ENCODE measurements at regions of chr3 and their contacts with region 1.

Region 1: GRCh38 chr3:30658328-30659052 is 52.1 kb downstream of the TGFBR2 start:
- DNase-seq: peak; percentile 74
- ATAC-seq: peak; percentile 83
- H3K4me3 ChIP-seq: peak overlapping the region in 2 of 5 experiments; percentile 2 to 23
- H3K4me3 Mint-ChIP-seq: peak overlapping the region; percentile 69
- H3K27ac ChIP-seq: peak overlapping the region; percentile 56 to 82
- H3K27ac Mint-ChIP-seq: peak overlapping the region; percentile 87
- H3K4me1 ChIP-seq: peaks cover 85 to 97% of the 10 kb centered on the region in 2 donors
- H3K4me1 Mint-ChIP-seq: peaks cover 93% of the 10 kb centered on the region
- H3K27me3 ChIP-seq: no peaks in the 10 kb centered on the region
- H3K27me3 Mint-ChIP-seq: no peaks in the 10 kb centered on the region
- CTCF ChIP-seq: no peak

Region 2: GRCh38 chr3:30319713-30320112 is 338.8 kb before region 1 on chr3:
- CTCF ChIA-PET with region 1: interaction called, 10 read pairs
- POLR2A ChIA-PET with region 1: interaction called, 3 read pairs
- intact Hi-C with region 1: no loop called
- DNase-seq: peak; percentile 68
- ATAC-seq: peak; percentile 92
- H3K4me3 ChIP-seq: no peak overlapping the region
- H3K4me3 Mint-ChIP-seq: no peak overlapping the region
- H3K27ac ChIP-seq: no peak overlapping the region
- H3K27ac Mint-ChIP-seq: no peak overlapping the region
- H3K4me1 ChIP-seq: peaks cover 5% of the 10 kb centered on the region in 2 donors
- H3K4me1 Mint-ChIP-seq: peaks cover 4% of the 10 kb centered on the region
- H3K27me3 ChIP-seq: no peaks in the 10 kb centered on the region
- H3K27me3 Mint-ChIP-seq: no peaks in the 10 kb centered on the region
- CTCF ChIP-seq: peak; percentile 77

Region 3: DNA sequence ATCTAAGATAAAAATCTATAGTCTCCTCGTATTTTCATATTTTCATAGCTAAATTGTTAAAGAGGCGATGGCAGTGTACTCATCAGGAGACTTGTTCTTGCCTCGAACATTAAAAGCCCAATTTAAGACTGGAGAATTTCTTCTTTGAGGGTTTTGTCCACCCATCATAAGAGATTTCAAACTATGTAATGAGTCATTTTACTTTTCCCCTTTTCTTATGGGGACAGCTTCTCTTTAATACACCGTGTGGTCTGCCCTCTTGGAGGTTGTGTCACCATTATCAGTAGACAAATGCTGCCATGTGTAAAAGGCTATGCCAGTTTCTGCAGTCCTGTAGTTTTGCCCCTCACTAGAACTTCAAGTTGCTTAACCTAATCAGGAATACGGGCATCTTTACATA is 35.1 kb before region 1 on chr3:
- CTCF ChIA-PET with region 1: interaction called, 5 read pairs
- POLR2A ChIA-PET with region 1: no interaction called
- intact Hi-C with region 1: loop called (anchors 5 kb)
- DNase-seq: no peak
- ATAC-seq: no peak
- H3K4me3 ChIP-seq: peak overlapping the region in 1 of 5 experiments; percentile 29
- H3K4me3 Mint-ChIP-seq: peak overlapping the region; percentile 65
- H3K27ac ChIP-seq: peak overlapping the region; percentile 42 to 89
- H3K27ac Mint-ChIP-seq: peak overlapping the region; percentile 93
- H3K4me1 ChIP-seq: peaks cover 94 to 100% of the 10 kb centered on the region in 2 donors
- H3K4me1 Mint-ChIP-seq: peaks cover 94% of the 10 kb centered on the region
- H3K27me3 ChIP-seq: no peaks in the 10 kb centered on the region
- H3K27me3 Mint-ChIP-seq: no peaks in the 10 kb centered on the region
- CTCF ChIP-seq: no peak

Region 4: DNA sequence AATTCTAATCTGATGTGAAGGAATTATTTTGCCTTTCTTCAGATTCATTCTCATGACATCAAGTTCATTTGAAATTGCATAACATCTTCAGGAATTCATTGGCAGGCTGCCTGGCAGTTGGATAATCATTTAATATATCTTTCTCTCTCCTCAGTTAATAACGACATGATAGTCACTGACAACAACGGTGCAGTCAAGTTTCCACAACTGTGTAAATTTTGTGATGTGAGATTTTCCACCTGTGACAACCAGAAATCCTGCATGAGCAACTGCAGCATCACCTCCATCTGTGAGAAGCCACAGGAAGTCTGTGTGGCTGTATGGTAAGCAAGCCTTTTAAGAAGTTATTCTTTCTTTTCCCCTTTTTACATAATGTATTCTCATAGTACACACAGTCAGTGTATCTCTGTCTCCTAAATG is 13.9 kb before region 1 on chr3:
- CTCF ChIA-PET with region 1: interaction called, 10 read pairs
- POLR2A ChIA-PET with region 1: interaction called, 8 read pairs
- intact Hi-C with region 1: loop called (anchors 1 kb)
- DNase-seq: peak; percentile 75
- ATAC-seq: peak; percentile 48
- H3K4me3 ChIP-seq: peak overlapping the region in 2 of 5 experiments; percentile 11 to 48
- H3K4me3 Mint-ChIP-seq: peak overlapping the region; percentile 70
- H3K27ac ChIP-seq: peak overlapping the region; percentile 89 to 90
- H3K27ac Mint-ChIP-seq: peak overlapping the region; percentile 87
- H3K4me1 ChIP-seq: peaks cover 95 to 98% of the 10 kb centered on the region in 2 donors
- H3K4me1 Mint-ChIP-seq: peaks cover 89% of the 10 kb centered on the region
- H3K27me3 ChIP-seq: no peaks in the 10 kb centered on the region
- H3K27me3 Mint-ChIP-seq: no peaks in the 10 kb centered on the region
- CTCF ChIP-seq: no peak

Region 5: GRCh38 chr3:30826531-30826942 is 168.0 kb after region 1 on chr3:
- CTCF ChIA-PET with region 1: no interaction called
- POLR2A ChIA-PET with region 1: no interaction called
- intact Hi-C with region 1: no loop called
- DNase-seq: no peak
- ATAC-seq: no peak
- H3K4me3 ChIP-seq: no peak overlapping the region
- H3K4me3 Mint-ChIP-seq: no peak overlapping the region
- H3K27ac ChIP-seq: no peak overlapping the region
- H3K27ac Mint-ChIP-seq: no peak overlapping the region
- H3K4me1 ChIP-seq: no peaks in the 10 kb centered on the region
- H3K4me1 Mint-ChIP-seq: no peaks in the 10 kb centered on the region
- H3K27me3 ChIP-seq: no peaks in the 10 kb centered on the region
- H3K27me3 Mint-ChIP-seq: peaks cover 9% of the 10 kb centered on the region
- CTCF ChIP-seq: no peak

Measured in B cell (primary cell).